Calu3 (cell line): ENCODE measurements at regions of chr3 and their contacts with region 1.

Region 1: GRCh38 chr3:87082796-87083440 is 92.0 kb upstream of the VGLL3 start:
- DNase-seq: peak; percentile 56
- H3K4me3 Mint-ChIP-seq: no peak overlapping the region
- H3K27ac Mint-ChIP-seq: no peak overlapping the region
- H3K4me1 Mint-ChIP-seq: peaks cover 18% of the 10 kb centered on the region
- H3K27me3 Mint-ChIP-seq: no peaks in the 10 kb centered on the region
- CTCF ChIP-seq: peak; percentile 28

Region 2: DNA sequence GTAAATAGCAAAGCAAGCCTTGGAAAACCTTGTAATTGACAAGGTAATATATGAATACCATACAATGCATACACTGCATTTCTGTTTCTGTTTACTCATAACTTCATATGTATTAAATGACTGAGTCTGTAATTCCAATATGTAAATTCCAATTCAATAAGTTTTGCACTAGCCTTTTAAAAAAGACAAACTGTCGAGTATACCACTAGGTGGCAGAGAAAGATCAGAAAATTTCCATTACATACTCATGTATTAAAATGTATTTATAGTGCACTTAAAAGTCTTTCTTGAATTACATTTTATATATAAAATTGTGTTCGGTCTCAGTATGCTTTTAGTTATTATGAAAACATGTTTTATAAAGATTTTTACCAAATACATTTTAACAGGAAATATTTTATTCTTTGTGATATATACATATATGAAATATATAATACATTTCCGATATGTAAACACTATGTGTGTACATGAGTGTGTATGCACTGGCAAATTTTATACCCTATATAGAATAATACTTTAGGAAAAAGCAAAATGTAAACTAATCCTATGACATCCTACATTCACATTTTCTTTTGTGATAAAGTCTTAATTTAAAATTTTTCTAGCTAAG is 308.7 kb before region 1 on chr3:
- CTCF ChIA-PET with region 1: interaction called, 9 read pairs
- intact Hi-C with region 1: loop called (anchors 1 kb)
- DNase-seq: no peak
- H3K4me3 Mint-ChIP-seq: no peak overlapping the region
- H3K27ac Mint-ChIP-seq: no peak overlapping the region
- H3K4me1 Mint-ChIP-seq: no peaks in the 10 kb centered on the region
- H3K27me3 Mint-ChIP-seq: no peaks in the 10 kb centered on the region
- CTCF ChIP-seq: no peak

Region 3: GRCh38 chr3:86887876-86888275 is 195.0 kb before region 1 on chr3:
- CTCF ChIA-PET with region 1: no interaction called
- intact Hi-C with region 1: loop called (anchors 10 kb)
- DNase-seq: no peak
- H3K4me3 Mint-ChIP-seq: no peak overlapping the region
- H3K27ac Mint-ChIP-seq: no peak overlapping the region
- H3K4me1 Mint-ChIP-seq: peaks cover 8% of the 10 kb centered on the region
- H3K27me3 Mint-ChIP-seq: no peaks in the 10 kb centered on the region
- CTCF ChIP-seq: no peak

Region 4: GRCh38 chr3:86990734-86991481 is 92.0 kb before region 1 on chr3 and contains the start of gene VGLL3:
- CTCF ChIA-PET with region 1: interaction called, 12 read pairs
- intact Hi-C with region 1: loop called (anchors 5 kb)
- DNase-seq: peak; percentile 84
- H3K4me3 Mint-ChIP-seq: peak within 1 kb of the TSS; percentile 95
- H3K27ac Mint-ChIP-seq: peak within 1 kb of the TSS; percentile 96
- H3K4me1 Mint-ChIP-seq: peaks cover 38% of the 10 kb centered on the region
- H3K27me3 Mint-ChIP-seq: no peaks in the 10 kb centered on the region
- CTCF ChIP-seq: peak; percentile 39
- total RNA-seq, gene VGLL3: 40.0 and 48.2 TPM in 2 replicates

Region 5: GRCh38 chr3:87167628-87168456 is 84.9 kb after region 1 on chr3:
- CTCF ChIA-PET with region 1: no interaction called
- intact Hi-C with region 1: loop called (anchors 5 kb)
- DNase-seq: peak; percentile 36
- H3K4me3 Mint-ChIP-seq: peak overlapping the region; percentile 50
- H3K27ac Mint-ChIP-seq: no peak overlapping the region
- H3K4me1 Mint-ChIP-seq: no peaks in the 10 kb centered on the region
- H3K27me3 Mint-ChIP-seq: no peaks in the 10 kb centered on the region
- CTCF ChIP-seq: peak; percentile 18

Region 6: GRCh38 chr3:87333393-87333892 is 250.5 kb after region 1 on chr3:
- CTCF ChIA-PET with region 1: no interaction called
- intact Hi-C with region 1: no loop called
- DNase-seq: peak; percentile 59
- H3K4me3 Mint-ChIP-seq: peak overlapping the region; percentile 20
- H3K27ac Mint-ChIP-seq: peak overlapping the region; percentile 89
- H3K4me1 Mint-ChIP-seq: peaks cover 35% of the 10 kb centered on the region
- H3K27me3 Mint-ChIP-seq: no peaks in the 10 kb centered on the region
- CTCF ChIP-seq: no peak

Region 7: DNA sequence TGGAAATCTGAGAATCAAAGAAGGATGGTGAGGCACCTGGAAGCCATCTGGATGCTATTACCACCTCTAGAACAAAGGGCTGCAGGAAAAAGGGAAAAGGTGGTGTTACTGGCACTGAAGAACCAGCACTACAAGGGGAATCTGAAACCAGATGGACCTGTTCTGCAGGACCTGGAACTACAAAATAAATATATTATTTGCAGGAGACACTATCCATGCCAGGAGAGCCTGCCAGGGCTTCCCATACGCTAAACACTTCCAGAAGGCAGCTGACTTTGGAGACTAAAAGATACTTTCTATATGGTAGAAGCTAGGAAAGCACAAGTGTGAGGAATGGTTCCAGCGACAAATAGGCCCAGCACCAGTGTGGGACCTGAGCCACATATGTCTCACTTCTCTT is 276.9 kb after region 1 on chr3:
- CTCF ChIA-PET with region 1: no interaction called
- intact Hi-C with region 1: no loop called
- DNase-seq: peak; percentile 45
- H3K4me3 Mint-ChIP-seq: no peak overlapping the region
- H3K27ac Mint-ChIP-seq: no peak overlapping the region
- H3K4me1 Mint-ChIP-seq: peaks cover 11% of the 10 kb centered on the region
- H3K27me3 Mint-ChIP-seq: no peaks in the 10 kb centered on the region
- CTCF ChIP-seq: no peak